Activated CD4-positive, alpha-beta memory T cell treated with anti-CD3 and anti-CD28 coated beads for 36 hours (primary cell): ENCODE measurements at regions of chr18 and their contacts with region 1.

Region 1: GRCh38 chr18:12726774-12727550 is 24.1 kb downstream of the PSMG2 start:
- DNase-seq: peak; percentile 43
- H3K4me3 Mint-ChIP-seq: no peak overlapping the region
- H3K27ac Mint-ChIP-seq: no peak overlapping the region
- H3K4me1 Mint-ChIP-seq: peaks cover 1% of the 10 kb centered on the region
- H3K27me3 Mint-ChIP-seq: no peaks in the 10 kb centered on the region

Region 2: GRCh38 chr18:12744103-12744502 is 17.1 kb after region 1 on chr18:
- CTCF ChIA-PET with region 1: interaction called, 19 read pairs
- POLR2A ChIA-PET with region 1: no interaction called
- intact Hi-C with region 1: no loop called
- DNase-seq: no peak
- H3K4me3 Mint-ChIP-seq: no peak overlapping the region
- H3K27ac Mint-ChIP-seq: no peak overlapping the region
- H3K4me1 Mint-ChIP-seq: peaks cover 4% of the 10 kb centered on the region
- H3K27me3 Mint-ChIP-seq: no peaks in the 10 kb centered on the region